ENCODE measurements at regions of chr1 and their contacts with region 1.

Region 1: GRCh38 chr1:46616277-46617107 is at the start of gene MOB3C:
- DNase-seq: peak; percentile 21 to 52 (median 39)
- H3K4me3 ChIP-seq: peak within 1 kb of the TSS; percentile 73 to 99 (median 83)
- H3K27ac ChIP-seq: peak within 1 kb of the TSS in 1 of 2 experiments; percentile 76
- H3K4me1 ChIP-seq: peaks cover 3 to 53% (median 41%) of the 10 kb centered on the region in 4 experiments
- H3K27me3 ChIP-seq: peaks cover 0 to 1% (median 0%) of the 10 kb centered on the region in 5 experiments

Region 2: GRCh38 chr1:46603858-46604549 is 12.5 kb before region 1 on chr1 and contains the start of gene MKNK1:
- CTCF ChIA-PET with region 1: interaction called, 15 read pairs
- POLR2A ChIA-PET with region 1: interaction called, 6 read pairs
- DNase-seq: peak; percentile 93 to 97 (median 95)
- H3K4me3 ChIP-seq: peak within 1 kb of the TSS; percentile 86 to 98 (median 90)
- H3K27ac ChIP-seq: peak within 1 kb of the TSS in 1 of 2 experiments; percentile 69
- H3K4me1 ChIP-seq: peaks cover 8 to 58% (median 30%) of the 10 kb centered on the region in 4 experiments
- H3K27me3 ChIP-seq: no peaks in the 10 kb centered on the region

Measured in common myeloid progenitor, CD34-positive (primary cell).